Brain microvascular endothelial cell (primary cell): ENCODE measurements at regions of chr11 and their contacts with region 1.

Region 1: DNA sequence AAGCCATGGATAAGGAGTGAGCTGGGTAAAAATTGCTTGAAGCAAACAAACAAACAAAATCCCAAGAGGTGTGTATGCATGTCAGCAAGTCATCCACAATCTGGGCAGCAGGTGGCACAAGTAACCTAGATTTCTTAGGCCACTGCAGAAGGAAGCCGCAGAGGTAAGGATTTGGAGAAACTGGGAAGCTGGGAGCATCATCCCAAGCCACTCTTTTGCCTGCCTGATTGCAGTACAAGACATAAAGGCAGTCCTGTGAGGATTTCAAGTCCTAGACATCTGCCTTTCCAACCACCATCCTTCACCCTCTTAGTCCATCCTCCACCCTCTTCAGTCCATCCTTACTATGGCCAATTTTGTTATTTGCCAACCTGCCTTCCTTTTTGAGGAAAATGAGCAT is 67.2 kb upstream of the BMAL1 start:
- DNase-seq: peak; percentile 76
- H3K4me3 ChIP-seq: no peak overlapping the region
- H3K27ac ChIP-seq: no peak overlapping the region
- H3K27me3 ChIP-seq: no peaks in the 10 kb centered on the region
- CTCF ChIP-seq: peak; percentile 73

Region 2: DNA sequence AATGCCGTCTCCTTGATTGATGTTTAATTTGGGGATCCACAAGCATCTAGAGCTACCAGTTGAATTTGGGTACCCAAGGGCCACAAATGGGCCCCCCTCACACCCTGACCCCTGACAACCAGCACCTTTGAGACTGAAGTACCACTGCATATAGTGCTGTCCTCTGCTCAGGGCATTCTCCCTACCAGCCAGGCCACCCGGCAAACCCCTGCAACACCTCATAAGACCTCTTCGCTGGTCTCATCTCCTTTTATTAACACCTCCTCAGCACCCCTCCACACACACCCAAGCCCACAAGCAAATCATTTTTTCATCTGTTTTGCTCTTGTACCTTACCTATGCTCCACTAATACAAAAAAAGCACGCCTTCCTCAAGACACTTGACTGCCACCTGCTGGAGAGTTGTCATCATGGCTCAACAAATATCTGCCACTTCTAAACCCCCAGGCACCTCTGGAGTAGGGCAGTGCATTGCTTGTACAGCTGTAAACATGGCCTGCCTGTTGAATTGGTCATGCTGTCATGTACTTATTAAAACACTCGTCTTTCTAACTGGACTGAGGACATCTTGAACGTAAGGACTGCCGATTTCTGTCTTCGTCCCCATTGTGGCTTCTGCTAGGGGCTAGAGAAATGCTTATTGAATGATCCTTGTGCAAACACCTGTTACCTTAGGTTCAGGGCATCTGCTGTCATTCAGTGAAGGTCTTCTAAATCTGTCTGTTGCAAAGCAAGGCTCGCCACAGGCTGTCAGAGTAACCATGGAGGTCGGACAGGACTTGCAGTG is 133.7 kb after region 1 on chr11:
- in situ Hi-C with region 1: loop called (anchors 25 kb)
- DNase-seq: peak; percentile 62
- H3K4me3 ChIP-seq: no peak overlapping the region
- H3K27ac ChIP-seq: no peak overlapping the region
- H3K27me3 ChIP-seq: no peaks in the 10 kb centered on the region
- CTCF ChIP-seq: peak; percentile 86